ENCODE measurements at regions of chr1 and their contacts with region 1.

Region 1: DNA sequence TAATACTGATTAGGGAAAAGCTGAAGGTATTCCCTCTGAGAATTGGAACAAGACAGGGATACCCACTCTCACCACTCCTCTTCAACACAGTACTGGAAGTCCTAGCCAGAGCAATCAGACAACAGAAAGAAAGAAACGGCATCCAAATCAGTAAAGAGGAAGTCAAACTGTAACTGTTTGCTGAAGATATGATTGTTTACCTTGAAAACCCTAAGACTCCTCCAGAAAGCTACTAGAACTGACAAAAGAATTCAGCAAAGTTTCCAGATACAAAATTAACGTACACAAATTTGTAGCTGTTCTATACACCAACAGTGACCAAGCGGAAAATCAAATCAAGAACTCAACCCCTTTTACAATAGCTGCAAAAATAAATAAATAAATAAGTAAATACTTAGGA is 78.6 kb downstream of the EXTL2 start:
- DNase-seq: no peak
- ATAC-seq: no peak
- H3K4me3 Mint-ChIP-seq: no peak overlapping the region
- H3K27ac Mint-ChIP-seq: no peak overlapping the region
- H3K4me1 Mint-ChIP-seq: peaks cover 9% of the 10 kb centered on the region
- H3K27me3 Mint-ChIP-seq: no peaks in the 10 kb centered on the region
- CTCF ChIP-seq: no peak

Region 2: DNA sequence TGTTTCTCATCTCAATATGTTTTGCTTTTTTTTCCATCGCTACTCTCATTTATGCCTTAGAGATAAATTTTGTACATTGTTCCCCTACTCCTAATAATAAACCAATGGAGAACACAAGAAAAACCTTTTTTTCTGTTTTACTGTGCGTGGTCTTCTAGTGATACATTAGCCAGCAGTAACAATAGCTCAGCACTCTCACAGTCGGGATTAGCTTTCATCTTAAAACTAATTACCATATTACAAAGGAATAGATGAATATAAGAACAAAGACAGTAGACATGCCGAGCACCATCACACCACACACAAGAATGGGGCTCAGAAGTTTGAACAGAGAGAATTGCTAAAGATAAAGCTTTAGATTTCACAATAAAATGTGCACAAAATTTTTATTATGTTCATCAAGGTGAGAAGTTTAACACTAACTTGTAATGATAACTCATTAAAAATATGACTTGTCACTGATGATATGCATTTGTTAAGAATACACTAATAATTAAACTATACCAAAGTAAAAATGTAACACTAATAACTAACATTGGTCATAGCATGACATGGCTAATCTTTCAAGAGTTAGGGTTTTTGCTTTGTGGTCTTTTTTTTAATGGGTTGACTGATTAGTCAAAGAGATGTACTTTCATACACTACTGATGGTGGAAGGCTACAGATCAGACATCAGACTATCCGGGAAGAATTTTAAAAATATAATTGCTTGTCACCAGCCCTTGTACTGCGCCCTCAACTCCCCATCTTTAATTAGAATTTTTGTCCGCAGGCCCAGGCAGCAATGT is 16.8 kb after region 1 on chr1:
- CTCF ChIA-PET with region 1: interaction called, 17 read pairs
- POLR2A ChIA-PET with region 1: no interaction called
- DNase-seq: no peak
- ATAC-seq: no peak
- H3K4me3 Mint-ChIP-seq: no peak overlapping the region
- H3K27ac Mint-ChIP-seq: no peak overlapping the region
- H3K4me1 Mint-ChIP-seq: peaks cover 3% of the 10 kb centered on the region; the same call in 1 of the 2 replicates
- H3K27me3 Mint-ChIP-seq: no peaks in the 10 kb centered on the region
- CTCF ChIP-seq: no peak

Measured in WTC11 (cell line).